ENCODE measurements at regions of chr19 and their contacts with region 1.

Region 1: DNA sequence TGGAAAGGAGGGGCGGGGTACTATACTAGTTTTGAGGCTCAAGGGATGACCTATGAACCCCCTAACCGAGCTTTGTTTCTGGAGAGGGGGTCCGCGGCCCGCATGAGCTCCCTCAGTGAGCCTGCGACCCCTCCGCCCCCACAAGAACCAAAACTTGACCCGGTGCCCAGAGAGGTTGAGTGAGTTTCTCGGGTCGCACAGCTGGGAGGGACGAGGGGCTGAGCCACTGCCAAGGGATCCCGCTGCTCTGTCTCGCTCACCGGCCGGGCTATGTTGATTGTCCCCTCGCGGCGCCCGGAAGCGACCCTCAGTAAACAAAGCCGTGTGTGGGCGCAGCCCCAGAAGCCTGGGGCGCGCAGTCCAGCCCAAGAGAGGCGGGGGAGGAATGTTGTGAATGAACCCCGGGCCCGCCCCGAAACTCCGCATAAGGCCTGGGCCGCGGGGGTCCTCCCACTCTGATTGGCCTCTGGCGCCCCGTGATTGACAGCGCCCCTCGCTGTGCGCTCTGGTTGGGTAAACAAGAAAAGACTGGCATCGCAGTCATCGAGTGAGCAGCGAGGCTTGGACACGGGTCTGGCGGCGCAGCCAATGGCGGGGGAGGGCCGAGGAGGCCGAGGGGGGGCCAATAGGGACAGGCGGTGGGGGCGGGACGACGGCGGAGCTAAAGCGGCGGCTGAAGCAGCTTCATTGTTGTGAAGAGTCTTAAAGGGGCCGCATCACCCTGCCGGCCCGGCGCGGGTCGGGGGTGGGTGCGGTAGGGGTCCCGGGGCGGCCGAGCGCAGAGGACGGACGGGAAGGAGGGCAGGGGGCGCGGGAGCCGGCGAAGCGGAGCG is at the start of gene ZSWIM4:
- DNase-seq: peak; percentile 98
- H3K4me3 ChIP-seq: peak within 1 kb of the TSS; percentile 87
- H3K27ac ChIP-seq: peak within 1 kb of the TSS; percentile 99
- H3K27me3 ChIP-seq: no peaks in the 10 kb centered on the region
- CTCF ChIP-seq: no peak
- polyA plus RNA-seq, gene ZSWIM4: 2.3 and 3.4 TPM in 2 replicates

Region 2: GRCh38 chr19:13718733-13719132 is 76.2 kb before region 1 on chr19:
- CTCF ChIA-PET with region 1: no interaction called
- POLR2A ChIA-PET with region 1: interaction called, 14 read pairs
- DNase-seq: peak; percentile 36
- H3K4me3 ChIP-seq: no peak overlapping the region
- H3K27ac ChIP-seq: no peak overlapping the region
- H3K27me3 ChIP-seq: no peaks in the 10 kb centered on the region
- CTCF ChIP-seq: peak; percentile 49

Region 3: GRCh38 chr19:13774217-13775191 is 20.5 kb before region 1 on chr19 and contains the start of gene C19orf53:
- CTCF ChIA-PET with region 1: no interaction called
- POLR2A ChIA-PET with region 1: interaction called, 17 read pairs
- DNase-seq: peak; percentile 83
- H3K4me3 ChIP-seq: peak within 1 kb of the TSS; percentile 96
- H3K27ac ChIP-seq: peak within 1 kb of the TSS; percentile 96
- H3K27me3 ChIP-seq: no peaks in the 10 kb centered on the region
- CTCF ChIP-seq: no peak
- polyA plus RNA-seq, gene C19orf53: 145 and 213 TPM in 2 replicates

Region 4: DNA sequence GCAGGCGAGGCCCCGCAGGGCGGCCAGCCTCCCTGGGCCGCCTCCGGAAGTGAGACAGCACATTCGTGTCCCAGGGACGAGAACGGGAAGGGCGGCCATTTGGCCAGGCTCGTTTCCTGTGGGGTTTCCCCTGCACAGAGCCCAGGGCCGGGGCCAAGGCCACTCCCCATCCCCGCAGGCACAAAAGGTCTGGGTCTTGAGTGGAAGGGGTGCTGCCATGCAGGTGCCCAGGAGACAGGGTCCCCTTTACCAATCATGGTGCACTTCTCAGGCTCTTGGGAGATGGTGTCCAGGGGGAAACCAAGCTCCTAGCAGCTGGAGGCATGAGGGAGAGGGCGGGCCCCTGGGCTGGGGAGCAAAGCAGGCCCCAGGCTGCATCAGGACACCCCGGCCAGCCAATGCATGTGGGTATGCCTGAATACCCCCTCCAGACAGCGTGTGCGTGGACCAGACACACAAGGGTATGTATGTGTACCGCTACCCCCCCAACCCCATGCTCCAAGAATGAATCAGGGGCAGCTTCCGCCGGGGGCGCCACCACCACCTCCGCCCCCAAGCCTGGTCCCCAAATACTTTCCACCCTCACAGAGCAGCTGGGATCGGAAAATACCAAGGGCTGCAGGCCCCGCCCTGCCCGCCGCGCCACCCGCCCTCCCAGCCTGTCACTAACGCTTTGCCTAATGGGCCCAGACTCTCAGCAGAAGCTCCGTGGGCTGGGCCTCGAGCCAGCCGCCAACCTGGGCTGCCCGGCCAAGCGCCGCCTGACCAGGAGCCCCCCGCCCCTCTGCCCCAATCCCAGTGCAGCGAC is 44.4 kb after region 1 on chr19:
- CTCF ChIA-PET with region 1: interaction called, 3 read pairs
- POLR2A ChIA-PET with region 1: interaction called, 19 read pairs
- DNase-seq: no peak
- H3K4me3 ChIP-seq: peak overlapping the region; percentile 88
- H3K27ac ChIP-seq: peak overlapping the region; percentile 90
- H3K27me3 ChIP-seq: no peaks in the 10 kb centered on the region
- CTCF ChIP-seq: no peak

Region 5: DNA sequence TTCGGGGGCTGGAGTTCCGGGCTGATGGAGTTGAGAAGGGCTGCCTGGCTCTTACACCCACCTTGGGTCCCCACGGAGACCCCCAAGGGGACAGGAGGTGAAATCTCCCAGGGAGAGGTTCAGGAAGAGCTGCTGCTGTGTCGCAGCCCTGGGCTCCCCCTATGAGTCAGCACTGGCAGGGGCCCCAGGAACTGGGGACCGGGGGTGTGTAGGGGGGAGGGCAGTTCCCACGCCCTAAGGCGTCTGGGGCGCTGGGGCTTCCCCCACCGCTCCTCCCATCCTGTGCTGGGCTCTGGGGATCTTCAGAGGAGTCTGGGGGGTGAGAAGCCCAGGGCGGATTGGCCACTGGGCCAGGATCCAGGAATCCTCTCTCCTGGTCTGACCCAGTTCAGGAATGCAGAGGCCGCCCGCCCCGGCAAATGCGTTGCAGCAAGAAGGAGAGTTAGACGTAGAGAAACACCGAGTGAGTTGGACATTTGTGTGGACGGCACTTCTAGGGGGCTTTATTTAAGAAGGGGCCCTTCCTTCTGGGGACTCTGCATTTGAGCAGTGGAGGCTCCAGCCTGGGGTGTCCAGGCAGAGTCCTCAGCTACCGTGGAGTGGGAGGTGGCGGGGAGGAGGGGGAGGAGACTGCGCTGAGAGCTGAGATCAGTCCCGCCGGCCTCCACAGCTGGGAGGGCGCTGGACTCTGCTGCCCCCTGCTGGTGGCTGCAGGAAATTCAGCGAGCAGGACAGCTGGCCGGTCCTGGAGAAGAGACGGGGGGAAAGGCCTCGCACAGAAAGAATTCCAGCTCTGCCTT is 67.0 kb after region 1 on chr19:
- CTCF ChIA-PET with region 1: interaction called, 23 read pairs
- POLR2A ChIA-PET with region 1: interaction called, 16 read pairs
- DNase-seq: peak; percentile 74
- H3K4me3 ChIP-seq: peak overlapping the region; percentile 49
- H3K27ac ChIP-seq: peak overlapping the region; percentile 90
- H3K27me3 ChIP-seq: no peaks in the 10 kb centered on the region
- CTCF ChIP-seq: peak; percentile 93

Measured in AG04450 (cell line).